AG04449 (cell line): ENCODE measurements at regions of chr12 and their contacts with region 1.

Region 1: GRCh38 chr12:85866986-85867776 is 6.9 kb upstream of the NTS start:
- DNase-seq: peak; percentile 10
- H3K4me3 ChIP-seq: no peak overlapping the region
- CTCF ChIP-seq: peak; percentile 68

Region 2: DNA sequence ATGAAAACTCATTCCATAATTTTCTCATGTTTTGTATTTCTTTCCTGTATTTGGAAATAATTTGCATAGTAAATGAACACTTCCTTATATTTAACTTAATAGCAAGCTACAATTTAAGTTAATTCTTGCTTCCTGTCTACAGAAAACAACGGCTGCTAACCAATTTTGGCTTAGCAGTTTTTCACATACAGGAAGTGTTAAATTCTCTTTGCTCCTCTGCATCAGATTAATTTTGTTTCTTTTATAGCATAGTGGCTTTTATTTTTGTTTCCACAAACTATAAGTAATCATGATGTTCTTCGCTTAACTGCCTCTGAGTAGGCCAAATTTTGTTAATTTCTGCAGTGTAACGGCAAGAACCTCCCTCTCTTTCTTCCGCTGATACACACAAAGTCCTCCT is 404.3 kb before region 1 on chr12:
- CTCF ChIA-PET with region 1: interaction called, 87 read pairs
- POLR2A ChIA-PET with region 1: no interaction called
- DNase-seq: no peak
- H3K4me3 ChIP-seq: no peak overlapping the region
- CTCF ChIP-seq: no peak

Region 3: DNA sequence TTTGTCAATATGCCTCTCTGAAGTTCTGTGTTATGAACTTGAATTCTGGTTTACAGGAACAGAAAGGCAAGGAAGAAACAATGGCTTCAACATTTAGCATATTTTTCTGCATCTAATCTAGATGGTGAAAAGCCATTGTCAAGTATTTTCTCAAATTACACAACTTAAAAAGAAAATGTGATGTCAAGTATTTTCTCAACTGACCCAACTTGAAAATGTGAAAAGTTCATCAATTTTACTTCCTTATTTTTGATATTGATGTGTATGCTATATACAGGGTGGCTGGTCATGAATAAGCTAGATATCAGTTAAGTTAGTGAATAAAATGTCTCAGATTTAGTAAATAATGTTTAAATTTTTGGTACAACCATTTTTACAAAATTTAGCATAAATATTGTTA is 390.4 kb before region 1 on chr12:
- CTCF ChIA-PET with region 1: interaction called, 29 read pairs
- POLR2A ChIA-PET with region 1: no interaction called
- DNase-seq: no peak
- H3K4me3 ChIP-seq: no peak overlapping the region
- CTCF ChIP-seq: no peak

Region 4: GRCh38 chr12:85568395-85569103 is 298.6 kb before region 1 on chr12:
- CTCF ChIA-PET with region 1: interaction called, 21 read pairs
- POLR2A ChIA-PET with region 1: no interaction called
- DNase-seq: no peak
- H3K4me3 ChIP-seq: no peak overlapping the region
- CTCF ChIP-seq: no peak

Region 5: GRCh38 chr12:85836197-85837090 is 30.7 kb before region 1 on chr12 and contains the start of gene RASSF9:
- CTCF ChIA-PET with region 1: interaction called, 14 read pairs
- POLR2A ChIA-PET with region 1: no interaction called
- DNase-seq: no peak
- H3K4me3 ChIP-seq: peak within 1 kb of the TSS; percentile 33
- CTCF ChIP-seq: no peak

Region 6: DNA sequence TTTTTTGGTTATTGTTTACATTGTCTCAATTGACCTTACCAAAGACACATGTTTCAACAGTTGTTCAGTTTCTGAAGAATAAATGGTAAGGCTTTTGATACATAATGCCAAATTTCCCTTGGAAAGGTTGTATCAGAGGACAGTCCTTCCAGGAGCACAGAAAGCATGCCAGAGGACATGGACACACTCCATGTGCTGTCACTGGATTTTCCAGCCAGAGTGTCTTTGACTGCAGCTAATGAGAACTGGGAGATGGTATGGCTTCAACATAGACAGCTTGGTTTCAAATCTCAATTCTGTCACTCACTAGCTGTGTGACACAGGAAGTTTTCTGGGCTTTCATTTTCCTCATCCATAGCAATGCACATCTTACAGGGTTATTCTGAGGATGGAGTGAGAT is 27.5 kb after region 1 on chr12:
- CTCF ChIA-PET with region 1: interaction called, 10 read pairs
- POLR2A ChIA-PET with region 1: no interaction called
- DNase-seq: no peak
- H3K4me3 ChIP-seq: no peak overlapping the region
- CTCF ChIP-seq: no peak